Gastrocnemius medialis (tissue), 4 donors: ENCODE measurements at regions of chr6 and their contacts with region 1.

Region 1: DNA sequence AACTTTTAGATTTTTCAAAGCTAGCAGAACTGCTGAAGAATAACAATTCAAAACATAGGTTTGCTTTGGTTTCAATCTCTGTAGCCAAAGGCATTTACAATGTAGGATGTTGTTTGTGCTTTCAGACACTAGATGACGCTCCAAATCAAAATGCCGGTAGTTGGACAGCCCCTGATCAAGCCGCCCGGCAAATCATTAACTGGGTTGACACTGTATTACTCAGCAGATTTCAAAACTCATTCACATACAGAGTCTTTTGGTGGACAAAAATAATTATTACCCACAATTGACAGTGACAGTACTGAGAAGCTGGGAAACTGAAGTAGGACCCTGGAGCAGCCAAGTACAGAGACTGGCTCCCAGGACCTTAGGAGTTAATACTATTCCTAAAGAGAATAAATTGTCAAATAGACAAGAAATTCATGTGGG is 21.3 kb upstream of the HFE start:
- DNase-seq: peak; percentile 47 to 48
- ATAC-seq: peak; percentile 86 to 95
- H3K4me3 ChIP-seq: peak overlapping the region in 1 of 4 donors; percentile 27
- H3K27ac ChIP-seq: peak overlapping the region in 2 of 4 donors; percentile 42 to 47
- H3K4me1 ChIP-seq: peaks cover 4 to 7% of the 10 kb centered on the region in 2 donors
- H3K27me3 ChIP-seq: no peaks in the 10 kb centered on the region
- CTCF ChIP-seq: peak; percentile 57 to 84 (median 81)
- POLR2A ChIP-seq: no peak

Region 2: DNA sequence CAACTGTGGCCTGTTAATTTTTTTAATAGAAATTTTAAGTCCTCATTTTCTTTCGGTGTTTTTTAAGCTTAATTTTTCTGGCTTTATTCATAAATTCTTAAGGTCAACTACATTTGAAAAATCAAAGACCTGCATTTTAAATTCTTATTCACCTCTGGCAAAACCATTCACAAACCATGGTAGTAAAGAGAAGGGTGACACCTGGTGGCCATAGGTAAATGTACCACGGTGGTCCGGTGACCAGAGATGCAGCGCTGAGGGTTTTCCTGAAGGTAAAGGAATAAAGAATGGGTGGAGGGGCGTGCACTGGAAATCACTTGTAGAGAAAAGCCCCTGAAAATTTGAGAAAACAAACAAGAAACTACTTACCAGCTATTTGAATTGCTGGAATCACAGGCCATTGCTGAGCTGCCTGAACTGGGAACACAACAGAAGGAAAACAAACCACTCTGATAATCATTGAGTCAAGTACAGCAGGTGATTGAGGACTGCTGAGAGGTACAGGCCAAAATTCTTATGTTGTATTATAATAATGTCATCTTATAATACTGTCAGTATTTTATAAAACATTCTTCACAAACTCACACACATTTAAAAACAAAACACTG is 31.4 kb after region 1 on chr6:
- in situ Hi-C with region 1: no loop called
- intact Hi-C with region 1: loop called (anchors 1 kb)
- DNase-seq: peak; percentile 38 to 44
- ATAC-seq: peak; percentile 84 to 92
- H3K4me3 ChIP-seq: no peak overlapping the region
- H3K27ac ChIP-seq: no peak overlapping the region
- H3K4me1 ChIP-seq: no peaks in the 10 kb centered on the region
- H3K27me3 ChIP-seq: no peaks in the 10 kb centered on the region
- CTCF ChIP-seq: peak; percentile 77 to 81 (median 80)
- POLR2A ChIP-seq: no peak